ENCODE measurements at regions of chr22 and their contacts with region 1.

Region 1: DNA sequence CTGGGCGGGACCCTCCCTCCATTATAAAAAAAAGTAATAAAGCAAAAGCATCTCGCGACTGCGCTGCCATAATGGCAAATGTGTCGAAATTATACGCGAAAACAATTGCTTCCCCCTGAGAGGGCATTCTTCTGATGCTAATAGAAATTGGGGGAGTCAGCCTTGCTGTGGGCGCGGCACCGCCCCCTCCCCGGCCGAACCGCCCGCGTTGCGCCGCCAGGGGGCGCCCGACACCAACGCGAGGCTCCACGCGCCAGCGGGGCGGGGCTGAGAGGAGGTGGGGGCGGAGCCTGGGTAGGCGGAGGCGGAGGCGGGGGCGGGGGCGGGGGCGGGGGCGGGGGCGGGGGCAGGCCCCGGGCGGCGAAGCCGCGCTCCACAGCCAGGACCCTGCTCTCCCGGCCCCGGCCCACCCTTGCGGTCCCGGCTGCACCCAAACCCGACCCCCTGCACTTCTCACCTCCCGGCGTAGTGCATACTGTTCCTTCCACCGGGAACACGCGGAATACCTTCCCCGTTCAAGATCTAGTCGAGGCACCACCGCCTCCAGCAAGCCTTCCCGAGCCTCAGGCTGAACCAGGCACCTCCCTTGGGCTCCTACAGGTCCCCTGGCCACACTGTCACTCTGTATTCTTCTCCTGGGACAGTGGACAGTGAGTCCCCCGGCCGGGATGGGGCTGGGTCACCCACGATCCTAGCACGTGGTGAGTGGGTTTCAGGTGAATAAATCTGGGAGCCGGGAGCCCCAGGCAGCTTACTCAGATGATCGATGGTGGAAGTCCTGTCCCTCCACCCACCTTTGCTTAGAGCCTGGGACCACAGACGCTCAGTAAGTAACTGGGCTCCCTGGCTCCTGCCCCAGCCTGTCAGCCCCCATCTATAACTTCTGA is 15.5 kb upstream of the UPK3A start:
- DNase-seq: peak in 1 of 2 experiments; percentile 86
- H3K4me3 ChIP-seq: peak overlapping the region; percentile 69
- H3K27ac ChIP-seq: no peak overlapping the region
- H3K4me1 ChIP-seq: peaks cover 8% of the 10 kb centered on the region; the same call in 1 of the 2 replicates
- H3K27me3 ChIP-seq: no peaks in the 10 kb centered on the region
- CTCF ChIP-seq: peak; percentile 86

Region 2: GRCh38 chr22:44697423-44698141 is 571.6 kb before region 1 on chr22:
- CTCF ChIA-PET with region 1: no interaction called
- POLR2A ChIA-PET with region 1: no interaction called
- intact Hi-C with region 1: loop called (anchors 10 kb)
- DNase-seq: peak; percentile 72 to 83
- H3K4me3 ChIP-seq: no peak overlapping the region
- H3K27ac ChIP-seq: no peak overlapping the region
- H3K4me1 ChIP-seq: no peaks in the 10 kb centered on the region
- H3K27me3 ChIP-seq: 0 out of 2 replicates have a peak, but pooled peaks cover 6% of the 10 kb centered on the region
- CTCF ChIP-seq: peak; percentile 99

Region 3: GRCh38 chr22:44975427-44976262 is 293.6 kb before region 1 on chr22:
- CTCF ChIA-PET with region 1: no interaction called
- POLR2A ChIA-PET with region 1: no interaction called
- intact Hi-C with region 1: loop called (anchors 5 kb)
- DNase-seq: peak; percentile 76 to 87
- H3K4me3 ChIP-seq: no peak overlapping the region
- H3K27ac ChIP-seq: no peak overlapping the region
- H3K4me1 ChIP-seq: no peaks in the 10 kb centered on the region
- H3K27me3 ChIP-seq: peaks cover 81% of the 10 kb centered on the region
- CTCF ChIP-seq: peak; percentile 97

Region 4: DNA sequence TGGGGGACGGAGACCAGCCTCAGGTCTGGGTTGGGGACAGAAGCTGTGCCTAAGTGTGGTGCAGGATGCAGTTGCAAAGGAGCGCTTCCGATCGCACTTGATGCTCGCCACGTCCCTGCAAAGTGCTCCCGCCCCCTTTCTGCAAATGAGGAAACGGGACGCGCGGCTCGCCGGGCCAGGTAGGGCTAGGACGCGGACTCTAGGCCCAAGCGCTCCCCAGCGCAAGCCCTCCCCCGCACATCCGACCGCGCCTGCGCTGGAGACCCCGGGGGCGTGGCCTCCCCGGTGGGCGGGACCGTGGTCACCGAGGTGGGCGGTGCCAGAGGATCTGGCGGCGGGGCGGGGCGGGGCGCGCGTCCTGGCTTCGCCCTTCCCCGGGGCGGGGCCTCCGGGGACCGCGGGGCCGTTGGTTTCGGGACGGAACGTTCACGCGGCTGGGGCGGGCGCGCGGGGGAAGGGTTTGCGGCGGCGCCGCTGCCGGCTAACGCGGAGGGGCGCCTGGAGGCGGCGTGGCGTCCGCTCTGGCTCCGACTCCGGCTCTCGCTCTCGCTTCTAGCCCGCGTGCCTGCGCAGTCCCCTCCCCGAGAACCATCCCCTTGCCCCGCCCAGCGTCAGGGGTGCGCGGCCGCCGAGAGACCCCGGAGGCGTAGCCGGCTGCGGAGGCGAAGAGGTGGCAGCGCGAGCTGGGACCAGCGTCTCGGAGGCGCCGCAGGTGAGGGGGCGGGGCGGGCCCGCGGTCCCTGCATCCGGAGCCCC is 40.4 kb after region 1 on chr22 and contains the start of gene FAM118A:
- CTCF ChIA-PET with region 1: no interaction called
- POLR2A ChIA-PET with region 1: no interaction called
- intact Hi-C with region 1: no loop called
- DNase-seq: peak; percentile 82 to 99
- H3K4me3 ChIP-seq: peak within 1 kb of the TSS; percentile 94
- H3K27ac ChIP-seq: peak within 1 kb of the TSS; percentile 38; the same call in 1 of the 2 replicates
- H3K4me1 ChIP-seq: peaks cover 34% of the 10 kb centered on the region
- H3K27me3 ChIP-seq: no peaks in the 10 kb centered on the region
- CTCF ChIP-seq: no peak
- total RNA-seq, gene FAM118A: 24.4 and 35.4 TPM in 2 replicates

Region 5: DNA sequence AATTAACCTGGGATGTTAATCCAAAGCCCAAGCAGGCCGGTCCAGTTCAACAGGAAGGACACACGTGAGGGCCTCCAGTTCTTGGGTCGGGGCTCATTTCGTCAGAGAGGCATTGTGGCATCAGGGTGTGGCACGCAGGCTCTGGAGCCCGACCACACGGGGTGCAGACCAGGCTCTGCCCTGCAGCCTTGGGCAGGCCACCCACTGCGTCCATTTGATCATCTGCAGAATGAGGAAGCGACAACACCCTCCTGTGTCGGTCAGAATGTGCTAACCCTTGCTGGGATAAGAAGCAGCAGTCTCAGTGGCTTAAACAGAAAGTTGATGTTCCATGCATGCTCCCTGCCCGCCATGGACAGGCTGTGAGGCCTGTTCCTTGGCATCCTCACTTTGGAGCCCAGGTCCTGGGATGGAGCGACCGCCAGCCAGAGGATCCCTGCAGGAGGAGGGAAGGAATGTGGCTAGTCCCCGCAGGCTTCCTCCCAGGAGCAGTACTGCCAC is 155.1 kb after region 1 on chr22:
- CTCF ChIA-PET with region 1: no interaction called
- POLR2A ChIA-PET with region 1: no interaction called
- intact Hi-C with region 1: loop called (anchors 5 kb)
- DNase-seq: peak; percentile 88 to 96
- H3K4me3 ChIP-seq: peak overlapping the region; percentile 9; the same call in 1 of the 2 replicates
- H3K27ac ChIP-seq: peak overlapping the region; percentile 53
- H3K4me1 ChIP-seq: peaks cover 26% of the 10 kb centered on the region
- H3K27me3 ChIP-seq: no peaks in the 10 kb centered on the region
- CTCF ChIP-seq: no peak; the same call in 1 of the 2 replicates

Region 6: GRCh38 chr22:45435544-45436139 is 166.4 kb after region 1 on chr22:
- CTCF ChIA-PET with region 1: no interaction called
- POLR2A ChIA-PET with region 1: no interaction called
- intact Hi-C with region 1: loop called (anchors 1 kb)
- DNase-seq: peak; percentile 82 to 87
- H3K4me3 ChIP-seq: no peak overlapping the region
- H3K27ac ChIP-seq: no peak overlapping the region
- H3K4me1 ChIP-seq: peaks cover 12% of the 10 kb centered on the region
- H3K27me3 ChIP-seq: no peaks in the 10 kb centered on the region
- CTCF ChIP-seq: peak; percentile 97

Region 7: GRCh38 chr22:45553351-45554039 is 284.3 kb after region 1 on chr22:
- CTCF ChIA-PET with region 1: no interaction called
- POLR2A ChIA-PET with region 1: no interaction called
- intact Hi-C with region 1: loop called (anchors 1 kb)
- DNase-seq: peak; percentile 35 to 67
- H3K4me3 ChIP-seq: no peak overlapping the region
- H3K27ac ChIP-seq: no peak overlapping the region
- H3K4me1 ChIP-seq: peaks cover 35% of the 10 kb centered on the region
- H3K27me3 ChIP-seq: no peaks in the 10 kb centered on the region
- CTCF ChIP-seq: peak; percentile 76

Region 8: GRCh38 chr22:45977003-45977411 is 707.8 kb after region 1 on chr22 and contains the start of gene WNT7B:
- CTCF ChIA-PET with region 1: interaction called, 10 read pairs
- POLR2A ChIA-PET with region 1: no interaction called
- intact Hi-C with region 1: no loop called
- DNase-seq: peak; percentile 79 to 86
- H3K4me3 ChIP-seq: peak within 1 kb of the TSS; percentile 99
- H3K27ac ChIP-seq: no peak within 1 kb of the TSS
- H3K4me1 ChIP-seq: peaks cover 36% of the 10 kb centered on the region
- H3K27me3 ChIP-seq: no peaks in the 10 kb centered on the region
- CTCF ChIP-seq: no peak
- total RNA-seq, gene WNT7B: 66.9 and 75.5 TPM in 2 replicates